ENCODE measurements at regions of chr13 and their contacts with region 1.

Region 1: DNA sequence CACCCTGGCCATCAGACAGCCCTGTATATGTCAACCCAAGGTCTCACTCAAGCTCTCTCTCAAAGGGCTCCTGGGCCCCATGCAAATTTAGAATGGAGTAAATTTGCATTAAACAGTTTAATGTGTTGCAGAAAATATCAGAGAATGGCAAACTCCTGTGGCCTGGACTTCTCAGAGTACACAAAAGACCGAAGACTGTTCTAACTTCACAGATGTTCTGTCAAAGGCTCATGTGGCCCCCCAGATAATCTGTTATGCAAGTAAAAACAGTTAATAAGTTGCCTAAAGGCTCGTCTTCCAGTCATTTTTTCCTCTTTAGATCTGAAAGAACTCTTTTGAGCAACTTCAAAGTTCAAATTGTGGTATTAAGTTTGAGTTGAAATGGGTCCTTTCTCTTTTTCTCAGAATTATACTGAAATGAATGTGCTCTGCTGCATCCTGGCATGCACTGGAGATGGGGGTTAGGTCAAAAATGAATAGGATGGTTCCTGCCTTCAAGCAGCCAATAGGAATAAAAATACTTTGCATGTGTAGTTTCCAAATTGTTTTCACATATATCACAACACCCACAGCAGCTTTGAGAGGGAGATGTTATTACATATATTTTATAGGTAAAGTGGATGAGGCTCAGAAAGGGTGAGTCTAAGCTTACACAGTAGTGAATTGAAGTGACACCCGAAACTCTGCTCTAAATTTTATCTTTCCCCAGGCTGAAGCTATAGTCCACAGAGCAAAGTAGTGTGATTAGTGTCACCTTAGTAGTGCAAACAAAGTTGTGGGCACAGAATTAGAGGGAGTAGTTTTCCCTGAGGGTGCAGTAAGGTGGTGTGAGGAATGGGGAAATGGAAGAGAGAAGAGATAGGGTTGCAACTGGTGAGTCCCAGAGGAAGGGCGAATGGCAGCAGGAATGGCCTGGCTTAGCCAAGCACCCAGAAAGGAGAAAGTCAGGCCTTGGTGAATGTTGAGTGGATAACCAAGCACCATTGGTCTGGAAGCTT is 205.0 kb upstream of the RFC3 start:
- DNase-seq: peak; percentile 63
- H3K4me3 Mint-ChIP-seq: peak overlapping the region; percentile 5
- H3K27ac Mint-ChIP-seq: peak overlapping the region; percentile 86
- H3K4me1 Mint-ChIP-seq: peaks cover 40% of the 10 kb centered on the region
- H3K27me3 Mint-ChIP-seq: peaks cover 6% of the 10 kb centered on the region

Region 2: DNA sequence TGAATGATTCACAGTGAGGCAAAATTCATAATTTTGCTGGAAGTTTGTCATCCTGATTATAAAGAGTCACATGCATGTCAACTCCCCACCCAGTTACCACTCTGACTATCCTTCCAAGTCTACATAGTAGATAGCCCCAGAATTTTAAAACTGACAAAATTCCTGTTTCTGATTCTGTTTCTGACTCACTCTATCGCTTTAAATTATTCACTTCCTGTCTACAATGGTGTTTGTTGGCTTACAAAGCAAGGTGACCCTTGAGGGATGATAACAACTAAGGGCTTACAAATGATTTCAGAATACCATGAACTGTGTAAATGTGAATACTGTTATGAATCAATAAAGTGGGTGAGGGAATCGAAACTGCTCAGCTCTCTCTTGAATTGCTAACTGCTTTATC is 695.4 kb before region 1 on chr13:
- CTCF ChIA-PET with region 1: no interaction called
- intact Hi-C with region 1: loop called (anchors 1 kb)
- DNase-seq: peak; percentile 16
- H3K4me3 Mint-ChIP-seq: no peak overlapping the region
- H3K27ac Mint-ChIP-seq: no peak overlapping the region
- H3K4me1 Mint-ChIP-seq: peaks cover 10% of the 10 kb centered on the region
- H3K27me3 Mint-ChIP-seq: peaks cover 3% of the 10 kb centered on the region

Region 3: DNA sequence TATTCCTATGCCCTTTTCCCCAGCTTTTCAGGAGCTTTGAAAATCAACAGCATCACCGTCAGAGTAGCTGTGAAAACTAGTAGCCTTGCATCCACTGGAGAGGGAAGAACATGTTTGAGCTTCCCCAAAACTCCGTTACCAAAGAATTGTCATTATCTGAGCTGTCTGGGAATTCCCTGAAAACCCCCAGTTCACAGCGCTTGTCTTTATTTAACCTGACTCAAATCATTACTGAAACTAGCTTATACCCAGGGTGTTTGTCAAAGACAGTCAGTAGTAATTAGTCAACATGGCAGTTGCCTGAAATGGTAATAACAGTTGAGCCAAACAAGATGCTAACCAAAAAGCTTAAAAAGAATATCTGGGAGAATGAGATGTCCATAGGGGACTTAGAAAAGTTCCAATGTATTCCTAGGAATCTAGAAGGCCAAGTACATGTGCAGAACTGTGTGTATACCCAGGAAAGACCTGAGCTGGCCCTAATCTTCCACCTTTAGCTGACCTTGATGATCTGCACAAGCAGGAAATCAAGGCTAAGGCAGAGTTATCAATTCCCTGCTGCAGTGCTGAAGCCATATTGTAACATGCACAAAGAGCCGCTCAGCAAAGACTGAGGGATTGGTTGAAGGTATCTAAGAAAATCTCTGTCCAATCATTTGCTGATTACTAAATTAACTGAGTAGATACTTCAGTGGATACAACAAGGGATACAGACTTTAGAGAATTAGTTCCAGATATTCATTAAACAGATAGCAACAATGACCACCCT is 465.9 kb before region 1 on chr13:
- CTCF ChIA-PET with region 1: no interaction called
- intact Hi-C with region 1: loop called (anchors 2 kb)
- DNase-seq: peak; percentile 38
- H3K4me3 Mint-ChIP-seq: no peak overlapping the region
- H3K27ac Mint-ChIP-seq: no peak overlapping the region
- H3K4me1 Mint-ChIP-seq: peaks cover 9% of the 10 kb centered on the region
- H3K27me3 Mint-ChIP-seq: peaks cover 17% of the 10 kb centered on the region

Region 4: GRCh38 chr13:33303831-33304597 is 308.9 kb before region 1 on chr13:
- CTCF ChIA-PET with region 1: no interaction called
- intact Hi-C with region 1: no loop called
- DNase-seq: no peak
- H3K4me3 Mint-ChIP-seq: no peak overlapping the region
- H3K27ac Mint-ChIP-seq: no peak overlapping the region
- H3K4me1 Mint-ChIP-seq: no peaks in the 10 kb centered on the region
- H3K27me3 Mint-ChIP-seq: peaks cover 15% of the 10 kb centered on the region

Region 5: DNA sequence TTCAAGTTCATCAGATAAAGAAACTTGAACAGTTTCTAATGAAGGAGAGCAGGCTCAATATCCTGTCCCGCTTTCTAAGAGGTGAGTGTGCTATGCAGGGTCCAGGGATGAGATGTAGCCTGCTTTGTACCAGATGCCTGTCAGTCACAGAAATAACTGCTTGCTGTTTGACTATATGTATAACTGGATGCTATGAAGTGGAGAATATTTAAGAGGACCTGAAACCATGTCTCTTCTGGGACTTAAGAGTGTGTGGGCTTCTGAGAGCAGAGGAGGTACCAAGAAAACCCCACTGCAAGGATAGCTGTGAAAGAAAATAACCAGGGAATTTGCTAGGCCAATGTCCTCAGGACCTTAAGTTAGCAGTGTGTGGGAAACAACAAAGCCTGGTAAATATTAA is 41.3 kb before region 1 on chr13:
- CTCF ChIA-PET with region 1: interaction called, 3 read pairs
- intact Hi-C with region 1: loop called (anchors 2 kb)
- DNase-seq: no peak
- H3K4me3 Mint-ChIP-seq: no peak overlapping the region
- H3K27ac Mint-ChIP-seq: no peak overlapping the region
- H3K4me1 Mint-ChIP-seq: peaks cover 6% of the 10 kb centered on the region
- H3K27me3 Mint-ChIP-seq: no peaks in the 10 kb centered on the region

Region 6: GRCh38 chr13:33590936-33591335 is 22.0 kb before region 1 on chr13:
- CTCF ChIA-PET with region 1: no interaction called
- intact Hi-C with region 1: no loop called
- DNase-seq: no peak
- H3K4me3 Mint-ChIP-seq: no peak overlapping the region
- H3K27ac Mint-ChIP-seq: no peak overlapping the region
- H3K4me1 Mint-ChIP-seq: no peaks in the 10 kb centered on the region
- H3K27me3 Mint-ChIP-seq: peaks cover 1% of the 10 kb centered on the region

Region 7: DNA sequence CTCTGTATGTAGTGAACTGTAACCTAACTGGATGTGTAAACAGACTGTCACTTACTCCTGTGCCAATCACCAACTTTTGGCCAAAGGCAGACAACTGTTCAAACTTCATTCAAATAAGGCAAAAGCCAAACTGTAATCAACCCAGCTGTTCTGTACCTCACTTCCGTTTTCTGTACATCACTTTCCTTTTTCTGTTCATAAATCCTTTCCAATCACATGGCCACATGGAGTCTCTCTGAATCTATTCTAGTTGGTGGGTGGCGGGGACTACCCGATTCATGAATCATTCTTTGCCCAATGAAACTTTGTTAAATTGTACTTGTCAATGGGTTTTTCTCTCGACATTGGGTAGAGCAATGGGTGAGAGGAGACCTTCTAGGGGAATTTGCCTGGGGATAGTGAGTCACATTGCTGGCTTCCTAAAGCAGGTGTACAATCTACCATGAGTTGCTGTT is 26.7 kb after region 1 on chr13:
- CTCF ChIA-PET with region 1: no interaction called
- intact Hi-C with region 1: loop called (anchors 1 kb)
- DNase-seq: peak; percentile 81
- H3K4me3 Mint-ChIP-seq: no peak overlapping the region
- H3K27ac Mint-ChIP-seq: peak overlapping the region; percentile 80
- H3K4me1 Mint-ChIP-seq: peaks cover 41% of the 10 kb centered on the region
- H3K27me3 Mint-ChIP-seq: no peaks in the 10 kb centered on the region

Region 8: GRCh38 chr13:33678906-33679657 is 66.1 kb after region 1 on chr13:
- CTCF ChIA-PET with region 1: interaction called, 4 read pairs
- intact Hi-C with region 1: loop called (anchors 1 kb)
- DNase-seq: peak; percentile 90
- H3K4me3 Mint-ChIP-seq: peak overlapping the region; percentile 49
- H3K27ac Mint-ChIP-seq: peak overlapping the region; percentile 93
- H3K4me1 Mint-ChIP-seq: peaks cover 30% of the 10 kb centered on the region
- H3K27me3 Mint-ChIP-seq: peaks cover 3% of the 10 kb centered on the region

Measured in activated naive CD4-positive, alpha-beta T cell treated with anti-CD3 and anti-CD28 coated beads for 36 hours (primary cell).